Left cardiac atrium (tissue), 4 donors: ENCODE measurements at regions of chr9 and their contacts with region 1.

Region 1: DNA sequence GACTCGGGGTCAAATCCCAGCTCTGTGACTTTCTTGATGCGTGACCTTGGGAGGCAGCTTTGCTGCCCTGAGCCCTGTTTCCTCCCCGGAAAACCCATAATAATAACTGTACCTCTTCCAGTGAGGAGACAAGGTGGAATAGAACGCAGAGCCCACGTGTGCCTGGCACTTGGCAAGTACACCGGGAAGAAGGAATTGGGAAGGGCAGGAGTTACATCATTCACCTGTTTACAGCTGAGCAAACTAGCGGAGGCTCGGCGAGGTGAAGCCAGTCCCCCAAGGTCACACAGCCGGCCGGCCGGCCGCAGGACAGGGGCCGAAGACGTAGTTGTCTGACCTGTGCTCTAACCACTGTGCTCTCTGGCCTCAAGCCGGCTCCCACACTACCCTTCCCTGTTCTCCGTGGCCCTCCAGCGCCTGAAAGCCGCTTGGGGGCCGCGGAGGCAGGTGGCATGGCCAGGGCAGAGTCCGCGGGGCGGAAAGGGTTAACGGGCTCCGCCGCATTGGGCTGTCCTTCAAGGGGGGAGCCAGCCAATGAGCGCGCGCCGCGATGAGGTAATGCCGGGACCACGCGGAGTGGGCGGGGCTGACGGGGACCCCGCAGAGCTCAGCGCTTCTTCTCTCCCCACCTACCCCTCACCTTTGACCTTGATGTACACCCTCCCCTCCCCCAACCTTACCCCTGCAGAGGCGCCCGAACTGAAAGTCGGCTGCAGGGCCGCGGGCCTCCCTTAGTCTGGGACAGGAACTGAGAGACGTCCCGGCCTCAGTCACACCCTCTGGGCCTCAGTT is 125.2 kb downstream of the C9orf50 start:
- DNase-seq: peak; percentile 97
- ATAC-seq: peak; percentile 86 to 89

Region 2: GRCh38 chr9:129139993-129140396 is 355.7 kb before region 1 on chr9:
- intact Hi-C with region 1: loop called in 1 of 2 experiments (anchors 5 kb)
- DNase-seq: peak; percentile 96
- ATAC-seq: peak; percentile 77 to 85

Region 3: DNA sequence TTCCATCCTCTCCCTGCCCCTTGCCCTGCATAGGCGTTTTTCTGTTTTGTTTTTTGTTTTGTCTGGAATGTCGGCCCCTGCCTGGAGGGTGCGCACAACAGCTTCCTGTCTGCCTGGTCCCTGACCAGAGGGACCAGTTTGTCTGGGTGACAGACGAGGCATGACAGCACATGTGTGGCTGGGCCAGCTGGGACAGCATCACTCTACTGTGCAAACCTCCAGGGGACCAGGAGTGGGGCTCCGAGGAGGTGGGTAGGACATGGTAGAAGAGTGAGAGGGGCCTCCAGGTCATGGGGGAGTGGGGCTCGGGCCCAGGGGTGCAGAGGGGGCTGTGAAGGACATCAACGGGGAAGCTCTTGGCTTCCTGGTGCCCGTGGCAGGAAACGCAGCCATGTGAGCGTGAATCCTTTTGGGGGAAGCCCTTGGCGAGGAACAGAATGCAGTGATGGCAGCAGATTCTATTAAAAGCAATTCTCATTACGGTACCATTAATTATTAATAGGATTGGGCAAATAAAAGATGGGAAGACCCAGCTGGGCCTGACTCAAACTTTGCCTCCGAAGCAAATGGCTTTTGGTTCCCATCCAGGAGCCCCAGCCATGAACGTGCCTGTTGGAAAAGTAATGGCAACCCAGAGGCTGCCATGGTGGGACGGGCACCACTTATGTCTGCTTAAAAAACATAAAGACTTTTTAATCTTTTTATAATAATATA is 133.3 kb before region 1 on chr9:
- intact Hi-C with region 1: no loop called
- DNase-seq: no peak
- ATAC-seq: no peak

Region 4: DNA sequence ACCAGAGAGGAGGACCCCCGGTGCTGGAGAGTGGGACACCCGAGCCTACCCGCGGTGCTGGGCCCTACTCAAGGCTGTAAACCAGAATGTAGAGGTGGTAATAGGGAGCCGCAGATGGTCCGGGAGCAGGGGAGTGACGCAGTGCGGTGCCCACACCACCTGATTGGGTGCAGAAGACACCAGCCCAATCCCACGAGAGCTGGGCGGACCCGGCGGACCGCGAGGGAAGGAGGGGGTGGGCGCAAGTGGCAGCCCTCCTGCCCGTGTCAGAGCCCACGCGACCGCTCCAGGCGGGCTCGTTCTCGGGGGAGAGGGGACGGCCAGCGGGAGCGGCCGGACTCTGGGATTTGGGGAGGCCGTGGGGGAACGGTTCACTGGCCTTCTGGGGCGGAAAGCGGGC is 54.0 kb after region 1 on chr9:
- intact Hi-C with region 1: loop called in 1 of 2 experiments (anchors 5 kb)
- DNase-seq: peak; percentile 70
- ATAC-seq: peak; percentile 60 to 77

Region 5: GRCh38 chr9:129602598-129603415 is 107.1 kb after region 1 on chr9:
- intact Hi-C with region 1: loop called (anchors 5 to 10 kb)
- DNase-seq: no peak
- ATAC-seq: no peak

Region 6: DNA sequence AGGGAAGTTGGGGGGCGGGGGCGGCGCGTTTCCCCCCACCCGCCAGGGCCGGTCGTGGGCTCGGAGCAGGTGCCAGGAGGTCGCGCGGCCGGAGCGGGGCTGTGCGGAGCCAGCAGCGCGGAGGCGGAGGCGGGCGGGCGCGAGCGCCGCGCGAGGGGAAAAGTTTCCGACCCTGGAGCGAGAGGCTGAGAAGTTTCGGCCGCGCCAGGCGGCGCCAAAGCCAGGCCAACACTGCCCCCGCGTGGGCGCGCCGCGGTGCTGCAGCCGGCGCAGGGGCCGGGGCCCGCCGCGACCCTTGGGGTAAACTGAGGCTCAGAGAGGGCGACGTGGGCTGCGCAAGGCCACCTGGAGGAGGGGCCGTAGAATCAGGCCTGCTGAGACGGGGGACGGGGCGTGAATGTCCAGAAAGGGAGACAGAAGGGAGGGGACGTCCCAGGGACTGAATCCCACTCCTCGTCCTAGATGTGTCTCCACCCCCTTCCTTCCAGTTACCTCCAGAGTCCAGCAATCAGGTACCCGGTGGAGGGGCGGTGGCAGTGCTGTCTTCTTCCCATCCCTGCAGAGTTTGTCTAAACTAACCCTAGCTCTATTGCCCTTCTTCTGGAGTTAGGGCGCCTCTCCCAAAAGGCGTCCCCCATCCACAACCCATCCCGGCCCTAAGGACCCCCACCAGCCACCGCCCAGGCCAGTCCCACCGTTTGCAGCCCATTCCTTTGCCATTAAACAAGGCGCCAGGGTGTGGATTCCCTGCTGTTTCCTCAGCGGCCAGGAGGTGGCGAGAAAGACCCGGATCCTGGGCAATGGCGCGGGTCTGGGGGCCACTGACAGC is 115.0 kb after region 1 on chr9:
- intact Hi-C with region 1: loop called in 1 of 2 experiments (anchors 10 kb)
- DNase-seq: peak; percentile 82
- ATAC-seq: peak; percentile 57 to 75

Region 7: GRCh38 chr9:129944506-129945116 is 448.9 kb after region 1 on chr9:
- intact Hi-C with region 1: no loop called
- DNase-seq: no peak
- ATAC-seq: peak; percentile 48 to 67